Activated CD8-positive, alpha-beta T cell treated with anti-CD3 and anti-CD28 coated beads for 36 hours (primary cell): ENCODE measurements at regions of chr7 and their contacts with region 1.

Region 1: DNA sequence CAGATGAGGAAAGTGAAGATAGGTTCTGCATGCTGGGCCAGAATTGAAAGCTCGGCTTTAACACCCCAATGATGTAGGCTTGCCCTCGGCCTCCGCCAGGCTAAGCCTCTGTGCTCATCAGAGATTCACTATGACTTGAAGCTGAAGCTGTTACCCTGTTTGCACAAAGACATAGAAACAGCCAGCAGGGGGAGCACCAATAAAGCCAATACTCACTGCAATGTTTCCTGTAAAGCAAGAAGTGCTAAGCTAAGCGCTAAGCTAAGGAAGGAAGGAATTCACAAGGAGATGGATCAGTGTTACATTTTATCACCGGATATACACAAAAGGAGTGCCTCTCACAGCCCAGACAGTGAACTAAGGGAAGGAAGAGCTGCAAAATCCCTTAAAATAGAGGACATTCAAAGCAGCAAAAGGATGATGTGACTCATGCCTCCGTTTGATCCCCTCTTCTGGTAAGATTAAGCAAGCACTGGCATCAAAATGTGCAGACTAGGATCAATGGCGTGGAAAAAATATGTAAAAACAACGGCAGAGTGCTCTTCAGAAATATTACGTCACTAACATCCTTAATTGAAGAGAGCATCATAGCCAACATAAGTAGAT is 153.8 kb downstream of the COBL start:
- DNase-seq: peak; percentile 88
- ATAC-seq: peak; percentile 94
- H3K4me3 Mint-ChIP-seq: no peak overlapping the region
- H3K27ac Mint-ChIP-seq: no peak overlapping the region
- H3K4me1 Mint-ChIP-seq: peaks cover 6% of the 10 kb centered on the region
- H3K27me3 Mint-ChIP-seq: peaks cover 11% of the 10 kb centered on the region
- CTCF ChIP-seq: peak; percentile 62

Region 2: GRCh38 chr7:50092579-50093491 is 1070.0 kb before region 1 on chr7 and contains the start of gene ZPBP:
- CTCF ChIA-PET with region 1: interaction called, 23 read pairs
- POLR2A ChIA-PET with region 1: no interaction called
- intact Hi-C with region 1: no loop called
- DNase-seq: peak; percentile 71
- ATAC-seq: peak; percentile 81
- H3K4me3 Mint-ChIP-seq: peak within 1 kb of the TSS; percentile 84
- H3K27ac Mint-ChIP-seq: peak within 1 kb of the TSS; percentile 93
- H3K4me1 Mint-ChIP-seq: peaks cover 19% of the 10 kb centered on the region
- H3K27me3 Mint-ChIP-seq: no peaks in the 10 kb centered on the region
- CTCF ChIP-seq: peak; percentile 98
- total RNA-seq, gene ZPBP: 0.36 TPM in 1 of 2 experiments, not detected in the other

Region 3: DNA sequence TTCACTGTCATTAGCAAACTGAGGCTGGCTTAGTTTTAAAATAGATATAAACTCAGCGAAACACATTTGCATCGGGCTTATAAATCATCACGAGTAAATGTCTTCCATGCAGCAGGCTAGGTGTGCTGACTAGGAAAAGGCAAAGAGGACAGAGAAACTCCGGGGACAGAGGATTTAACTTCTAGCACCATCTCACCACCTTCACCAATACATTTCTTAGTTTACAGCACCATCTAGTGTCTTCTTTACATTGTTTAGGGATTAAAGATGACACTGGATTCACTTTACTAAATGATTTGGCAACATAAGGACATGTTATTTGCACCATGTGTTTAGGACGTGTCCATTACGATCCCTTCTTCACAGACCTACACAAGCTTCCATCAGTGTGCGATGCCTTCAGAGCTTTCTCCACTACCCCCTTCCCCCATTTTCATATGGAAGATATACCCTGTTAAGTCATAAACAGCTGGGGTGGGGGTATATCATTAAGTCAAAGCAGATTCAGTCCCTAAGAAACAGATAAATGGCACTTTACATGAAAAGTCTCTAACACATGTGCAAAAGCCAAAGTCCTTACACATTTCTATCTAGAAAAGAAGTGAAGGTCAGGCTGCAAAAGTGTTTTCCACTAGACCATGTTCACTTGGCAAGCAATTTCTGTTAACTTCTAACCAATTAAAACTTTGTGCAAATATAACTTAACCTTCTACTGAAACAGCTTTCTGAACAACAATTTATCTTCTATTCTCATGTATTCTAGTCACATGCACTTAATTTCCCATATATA is 483.4 kb before region 1 on chr7:
- CTCF ChIA-PET with region 1: interaction called, 16 read pairs
- POLR2A ChIA-PET with region 1: no interaction called
- intact Hi-C with region 1: no loop called
- DNase-seq: no peak
- ATAC-seq: peak; percentile 61
- H3K4me3 Mint-ChIP-seq: no peak overlapping the region
- H3K27ac Mint-ChIP-seq: no peak overlapping the region
- H3K4me1 Mint-ChIP-seq: peaks cover 2% of the 10 kb centered on the region
- H3K27me3 Mint-ChIP-seq: peaks cover 4% of the 10 kb centered on the region
- CTCF ChIP-seq: peak; percentile 43

Region 4: GRCh38 chr7:51060536-51060935 is 102.3 kb before region 1 on chr7:
- CTCF ChIA-PET with region 1: interaction called, 16 read pairs
- POLR2A ChIA-PET with region 1: no interaction called
- intact Hi-C with region 1: no loop called
- DNase-seq: no peak
- ATAC-seq: no peak
- H3K4me3 Mint-ChIP-seq: no peak overlapping the region
- H3K27ac Mint-ChIP-seq: no peak overlapping the region
- H3K4me1 Mint-ChIP-seq: no peaks in the 10 kb centered on the region
- H3K27me3 Mint-ChIP-seq: no peaks in the 10 kb centered on the region
- CTCF ChIP-seq: no peak

Region 5: DNA sequence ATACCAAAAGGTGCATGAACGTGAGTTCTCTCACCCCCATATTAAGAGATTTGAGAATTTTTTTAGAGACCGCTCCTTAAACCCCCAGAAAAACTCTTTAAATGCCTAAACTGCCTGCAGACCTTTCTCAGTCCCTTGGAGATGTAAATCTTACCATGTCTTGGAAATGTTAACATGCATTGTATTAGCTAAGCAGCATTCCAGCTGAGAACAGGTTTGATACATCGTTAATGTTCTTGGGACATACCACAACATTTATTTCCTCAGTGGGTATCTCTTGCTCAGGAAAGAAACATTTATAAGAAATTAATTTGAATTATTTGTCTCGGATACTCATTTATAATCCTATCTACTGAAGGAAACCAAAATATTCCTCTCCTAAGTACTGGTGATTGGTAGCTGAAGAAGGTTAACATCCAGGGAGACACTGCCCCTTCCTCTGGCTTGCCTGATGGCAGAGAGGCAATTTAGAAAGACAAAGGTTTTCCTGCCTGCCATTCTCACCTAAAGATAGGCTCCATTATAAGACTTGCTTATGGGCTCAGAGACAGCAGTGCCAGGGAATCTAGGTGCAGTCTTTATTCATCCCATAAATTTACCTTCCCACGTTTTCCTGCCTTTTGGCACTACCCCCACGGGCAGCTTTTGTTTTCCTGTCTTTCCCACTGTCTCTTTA is 12.6 kb after region 1 on chr7:
- CTCF ChIA-PET with region 1: interaction called, 17 read pairs
- POLR2A ChIA-PET with region 1: no interaction called
- intact Hi-C with region 1: no loop called
- DNase-seq: no peak
- ATAC-seq: no peak
- H3K4me3 Mint-ChIP-seq: no peak overlapping the region
- H3K27ac Mint-ChIP-seq: no peak overlapping the region
- H3K4me1 Mint-ChIP-seq: no peaks in the 10 kb centered on the region
- H3K27me3 Mint-ChIP-seq: peaks cover 6% of the 10 kb centered on the region
- CTCF ChIP-seq: no peak

Region 6: DNA sequence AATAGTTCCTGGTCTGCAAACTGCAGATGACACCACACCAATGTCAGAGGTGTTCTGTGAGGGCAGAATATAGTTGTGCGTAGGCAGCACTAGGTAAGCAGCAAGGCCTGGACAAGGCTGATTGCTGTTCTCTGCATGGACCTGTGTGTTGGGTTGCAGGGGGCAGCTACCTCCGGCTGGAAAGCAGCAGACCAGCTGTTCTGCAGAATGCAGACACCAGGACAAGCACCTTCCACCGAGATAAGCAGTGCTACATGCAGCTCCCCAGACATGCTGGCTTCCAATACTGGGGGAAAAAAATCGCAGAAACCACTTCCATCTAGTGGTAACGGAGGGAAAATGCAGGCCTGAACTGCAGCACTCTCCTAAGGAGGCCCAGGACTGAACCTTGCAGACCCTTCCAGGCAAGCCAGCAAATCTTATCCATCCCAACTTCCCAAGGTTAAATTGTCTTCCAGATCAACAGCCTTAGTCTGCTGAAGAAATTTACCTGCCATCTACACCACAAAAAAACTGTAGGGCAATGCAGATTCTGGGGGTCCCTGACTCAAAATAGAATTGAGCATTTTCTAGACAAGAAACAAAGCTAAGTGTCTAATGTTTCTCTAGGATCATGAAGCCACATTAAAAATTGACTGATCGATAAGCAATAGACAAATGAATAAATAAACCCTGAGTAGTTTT is 204.2 kb after region 1 on chr7:
- CTCF ChIA-PET with region 1: interaction called, 81 read pairs
- POLR2A ChIA-PET with region 1: no interaction called
- intact Hi-C with region 1: loop called (anchors 2 kb)
- DNase-seq: peak; percentile 9
- ATAC-seq: peak; percentile 62
- H3K4me3 Mint-ChIP-seq: no peak overlapping the region
- H3K27ac Mint-ChIP-seq: no peak overlapping the region
- H3K4me1 Mint-ChIP-seq: no peaks in the 10 kb centered on the region
- H3K27me3 Mint-ChIP-seq: no peaks in the 10 kb centered on the region
- CTCF ChIP-seq: peak; percentile 42